HCT116 (cell line): ENCODE measurements at regions of chr16 and their contacts with region 1.

Region 1: GRCh38 chr16:49183911-49184310 is 97.7 kb downstream of the CBLN1 start:
- DNase-seq: peak; percentile 31
- ATAC-seq: peak; percentile 90
- H3K4me3 ChIP-seq: no peak overlapping the region
- H3K27ac ChIP-seq: no peak overlapping the region
- H3K4me1 ChIP-seq: no peaks in the 10 kb centered on the region
- H3K27me3 ChIP-seq: peaks cover 14% of the 10 kb centered on the region
- CTCF ChIP-seq: peak; percentile 45 to 73 (median 69); a peak in 5 of 6 replicates
- POLR2A ChIP-seq: no peak
- RAD21 ChIP-seq: peak; percentile 67

Region 2: DNA sequence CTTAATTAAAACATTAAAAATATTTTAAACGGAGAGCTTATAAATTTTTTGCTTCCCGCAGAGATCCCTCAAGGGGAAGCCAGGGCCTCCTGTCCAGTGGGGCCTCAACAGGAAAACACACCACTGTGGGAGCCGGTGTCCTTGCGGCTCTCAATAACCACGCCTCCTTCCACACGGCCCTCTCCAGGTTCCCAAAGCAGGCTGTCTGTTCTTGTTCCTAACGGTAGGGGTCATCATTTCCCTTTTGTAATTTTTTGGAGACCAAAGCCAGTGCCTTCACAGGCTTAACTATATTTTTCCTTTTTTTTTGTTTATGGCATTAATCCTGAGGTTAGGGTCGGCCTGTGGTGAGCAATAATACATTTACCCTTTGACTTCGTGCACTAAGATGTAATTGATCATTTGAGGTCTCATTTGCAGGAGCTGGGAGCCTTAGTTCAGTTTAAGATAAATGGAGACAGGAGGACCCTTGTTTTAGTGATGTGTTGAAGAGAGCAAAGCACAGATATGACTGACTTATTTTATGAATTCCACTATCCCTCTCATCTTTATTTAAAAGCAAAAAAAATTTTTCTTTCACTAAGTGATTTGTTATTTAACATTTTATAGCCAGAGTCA is 496.4 kb before region 1 on chr16:
- CTCF ChIA-PET with region 1: no interaction called
- POLR2A ChIA-PET with region 1: no interaction called
- RAD21 ChIA-PET with region 1: no interaction called
- intact Hi-C with region 1: loop called (anchors 2 kb)
- DNase-seq: peak; percentile 60
- ATAC-seq: peak; percentile 100
- H3K4me3 ChIP-seq: no peak overlapping the region
- H3K27ac ChIP-seq: no peak overlapping the region
- H3K4me1 ChIP-seq: no peaks in the 10 kb centered on the region
- H3K27me3 ChIP-seq: peaks cover 16% of the 10 kb centered on the region
- CTCF ChIP-seq: peak; percentile 59 to 75 (median 65); a peak in 5 of 6 replicates
- POLR2A ChIP-seq: no peak
- RAD21 ChIP-seq: peak; percentile 81

Region 3: GRCh38 chr16:48901712-48902374 is 282.1 kb before region 1 on chr16:
- CTCF ChIA-PET with region 1: no interaction called
- POLR2A ChIA-PET with region 1: no interaction called
- RAD21 ChIA-PET with region 1: no interaction called
- intact Hi-C with region 1: loop called (anchors 5 kb)
- DNase-seq: peak; percentile 15
- ATAC-seq: peak; percentile 91
- H3K4me3 ChIP-seq: no peak overlapping the region
- H3K27ac ChIP-seq: no peak overlapping the region
- H3K4me1 ChIP-seq: no peaks in the 10 kb centered on the region
- H3K27me3 ChIP-seq: peaks cover 56% of the 10 kb centered on the region; the same call in 1 of the 2 replicates
- CTCF ChIP-seq: peak in 2 of 3 experiments; percentile 55 to 63; a peak in 4 of 6 replicates
- POLR2A ChIP-seq: no peak
- RAD21 ChIP-seq: peak; percentile 53

Region 4: GRCh38 chr16:48949636-48950035 is 234.3 kb before region 1 on chr16:
- CTCF ChIA-PET with region 1: no interaction called
- POLR2A ChIA-PET with region 1: no interaction called
- RAD21 ChIA-PET with region 1: no interaction called
- intact Hi-C with region 1: no loop called
- DNase-seq: no peak
- ATAC-seq: peak; percentile 53; the same call in 1 of the 2 replicates
- H3K4me3 ChIP-seq: no peak overlapping the region
- H3K27ac ChIP-seq: no peak overlapping the region
- H3K4me1 ChIP-seq: peaks cover 0 to 22% of the 10 kb centered on the region in 2 experiments; a peak in 2 of 4 replicates
- H3K27me3 ChIP-seq: no peaks in the 10 kb centered on the region
- CTCF ChIP-seq: no peak
- POLR2A ChIP-seq: no peak
- RAD21 ChIP-seq: no peak

Region 5: GRCh38 chr16:49000594-49000993 is 183.3 kb before region 1 on chr16:
- CTCF ChIA-PET with region 1: no interaction called
- POLR2A ChIA-PET with region 1: no interaction called
- RAD21 ChIA-PET with region 1: no interaction called
- intact Hi-C with region 1: loop called (anchors 2 kb)
- DNase-seq: peak; percentile 26
- ATAC-seq: peak; percentile 89
- H3K4me3 ChIP-seq: no peak overlapping the region
- H3K27ac ChIP-seq: no peak overlapping the region
- H3K4me1 ChIP-seq: peaks cover 0 to 3% of the 10 kb centered on the region in 2 experiments; a peak in 1 of 4 replicates
- H3K27me3 ChIP-seq: no peaks in the 10 kb centered on the region
- CTCF ChIP-seq: peak; percentile 38 to 87 (median 87); a peak in 5 of 6 replicates
- POLR2A ChIP-seq: no peak
- RAD21 ChIP-seq: peak; percentile 54

Region 6: GRCh38 chr16:49213594-49213993 is 29.7 kb after region 1 on chr16:
- CTCF ChIA-PET with region 1: no interaction called
- POLR2A ChIA-PET with region 1: no interaction called
- RAD21 ChIA-PET with region 1: no interaction called
- intact Hi-C with region 1: no loop called
- DNase-seq: no peak
- ATAC-seq: no peak
- H3K4me3 ChIP-seq: no peak overlapping the region
- H3K27ac ChIP-seq: no peak overlapping the region
- H3K4me1 ChIP-seq: no peaks in the 10 kb centered on the region
- H3K27me3 ChIP-seq: peaks cover 24% of the 10 kb centered on the region
- CTCF ChIP-seq: no peak
- POLR2A ChIP-seq: no peak
- RAD21 ChIP-seq: no peak